ENCODE measurements at regions of chr2 and their contacts with region 1.

Region 1: GRCh38 chr2:210519594-210519993 is 36.8 kb upstream of the CPS1 start:
- DNase-seq: no peak
- H3K4me3 ChIP-seq: no peak overlapping the region
- H3K27ac ChIP-seq: no peak overlapping the region
- H3K4me1 ChIP-seq: no peaks in the 10 kb centered on the region
- H3K27me3 ChIP-seq: no peaks in the 10 kb centered on the region
- CTCF ChIP-seq: no peak
- EP300 ChIP-seq: no peak
- POLR2A ChIP-seq: no peak

Region 2: GRCh38 chr2:210337159-210337558 is 182.4 kb before region 1 on chr2:
- intact Hi-C with region 1: no loop called
- DNase-seq: no peak
- H3K4me3 ChIP-seq: no peak overlapping the region
- H3K27ac ChIP-seq: no peak overlapping the region
- H3K4me1 ChIP-seq: no peaks in the 10 kb centered on the region
- H3K27me3 ChIP-seq: no peaks in the 10 kb centered on the region
- CTCF ChIP-seq: no peak
- EP300 ChIP-seq: no peak
- POLR2A ChIP-seq: no peak

Region 3: GRCh38 chr2:210442878-210443277 is 76.7 kb before region 1 on chr2:
- intact Hi-C with region 1: no loop called
- DNase-seq: no peak
- H3K4me3 ChIP-seq: no peak overlapping the region
- H3K27ac ChIP-seq: no peak overlapping the region
- H3K4me1 ChIP-seq: peaks cover 2% of the 10 kb centered on the region
- H3K27me3 ChIP-seq: no peaks in the 10 kb centered on the region
- CTCF ChIP-seq: no peak
- EP300 ChIP-seq: no peak
- POLR2A ChIP-seq: no peak

Region 4: GRCh38 chr2:210534879-210535278 is 15.3 kb after region 1 on chr2:
- intact Hi-C with region 1: loop called in 1 of 4 experiments (anchors 2 kb)
- DNase-seq: no peak
- H3K4me3 ChIP-seq: no peak overlapping the region
- H3K27ac ChIP-seq: no peak overlapping the region
- H3K4me1 ChIP-seq: no peaks in the 10 kb centered on the region
- H3K27me3 ChIP-seq: no peaks in the 10 kb centered on the region
- CTCF ChIP-seq: no peak
- EP300 ChIP-seq: no peak
- POLR2A ChIP-seq: no peak

Measured in ovary (tissue), 10 donors.